ENCODE measurements at regions of chr19 and their contacts with region 1.

Region 1: GRCh38 chr19:1605236-1606137 is at the start of gene UQCR11:
- DNase-seq: peak; percentile 94
- H3K4me3 Mint-ChIP-seq: peak within 1 kb of the TSS; percentile 98
- H3K27ac Mint-ChIP-seq: peak within 1 kb of the TSS; percentile 97
- H3K4me1 Mint-ChIP-seq: peaks cover 48% of the 10 kb centered on the region
- H3K27me3 Mint-ChIP-seq: no peaks in the 10 kb centered on the region
- total RNA-seq, gene UQCR11: 281 to 293 TPM

Region 2: DNA sequence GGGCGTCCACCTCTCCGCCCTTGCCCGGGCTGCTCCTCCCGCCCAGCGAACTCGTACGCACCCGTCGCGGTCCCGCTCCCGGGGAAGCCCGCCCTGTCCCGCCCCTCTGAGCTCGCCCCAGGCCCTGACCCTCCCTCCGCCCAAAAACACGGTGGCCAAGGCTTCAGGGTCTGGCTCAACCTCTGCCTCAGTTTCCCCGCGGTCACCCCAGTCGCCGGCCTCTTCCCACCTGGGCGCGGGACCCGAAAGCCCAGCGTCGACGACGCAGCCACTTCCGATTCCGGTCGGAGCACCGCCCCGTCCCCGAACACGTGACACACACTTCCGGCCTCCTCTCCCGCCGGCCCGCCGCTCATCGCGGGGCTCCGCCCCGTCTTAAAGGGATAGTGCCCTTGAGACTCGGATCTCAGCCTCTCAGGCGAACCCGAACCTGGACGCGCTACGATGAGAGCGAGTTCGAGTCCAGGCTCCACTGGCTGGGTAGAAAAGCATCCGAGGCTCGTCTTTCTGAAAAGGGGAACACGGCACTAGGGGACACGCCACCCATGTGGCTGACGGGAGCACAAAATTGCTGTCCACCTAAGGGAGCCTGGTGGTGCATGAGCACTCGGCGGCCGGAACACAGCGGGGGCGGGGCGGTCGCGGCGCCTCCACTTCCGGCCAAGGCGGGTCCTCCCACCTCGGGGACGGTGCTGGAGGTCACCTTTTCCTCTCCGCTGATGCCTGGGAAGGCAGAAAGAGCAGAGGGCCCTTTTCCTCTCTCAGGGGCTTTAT is 126.4 kb before region 1 on chr19 and contains the start of gene C19orf25:
- CTCF ChIA-PET with region 1: no interaction called
- intact Hi-C with region 1: loop called (anchors 1 kb)
- DNase-seq: peak; percentile 96
- H3K4me3 Mint-ChIP-seq: peak within 1 kb of the TSS; percentile 99
- H3K27ac Mint-ChIP-seq: peak within 1 kb of the TSS; percentile 95
- H3K4me1 Mint-ChIP-seq: peaks cover 15% of the 10 kb centered on the region
- H3K27me3 Mint-ChIP-seq: no peaks in the 10 kb centered on the region
- total RNA-seq, gene C19orf25: 17.5 to 20.8 TPM

Region 3: GRCh38 chr19:1592755-1593500 is 12.6 kb before region 1 on chr19 and contains the start of gene MBD3:
- CTCF ChIA-PET with region 1: interaction called, 6 read pairs
- intact Hi-C with region 1: loop called (anchors 1 kb)
- DNase-seq: peak; percentile 84
- H3K4me3 Mint-ChIP-seq: peak within 1 kb of the TSS; percentile 96
- H3K27ac Mint-ChIP-seq: peak within 1 kb of the TSS; percentile 82
- H3K4me1 Mint-ChIP-seq: peaks cover 20% of the 10 kb centered on the region
- H3K27me3 Mint-ChIP-seq: no peaks in the 10 kb centered on the region
- total RNA-seq, gene MBD3: 58.1 to 63.7 TPM

Region 4: DNA sequence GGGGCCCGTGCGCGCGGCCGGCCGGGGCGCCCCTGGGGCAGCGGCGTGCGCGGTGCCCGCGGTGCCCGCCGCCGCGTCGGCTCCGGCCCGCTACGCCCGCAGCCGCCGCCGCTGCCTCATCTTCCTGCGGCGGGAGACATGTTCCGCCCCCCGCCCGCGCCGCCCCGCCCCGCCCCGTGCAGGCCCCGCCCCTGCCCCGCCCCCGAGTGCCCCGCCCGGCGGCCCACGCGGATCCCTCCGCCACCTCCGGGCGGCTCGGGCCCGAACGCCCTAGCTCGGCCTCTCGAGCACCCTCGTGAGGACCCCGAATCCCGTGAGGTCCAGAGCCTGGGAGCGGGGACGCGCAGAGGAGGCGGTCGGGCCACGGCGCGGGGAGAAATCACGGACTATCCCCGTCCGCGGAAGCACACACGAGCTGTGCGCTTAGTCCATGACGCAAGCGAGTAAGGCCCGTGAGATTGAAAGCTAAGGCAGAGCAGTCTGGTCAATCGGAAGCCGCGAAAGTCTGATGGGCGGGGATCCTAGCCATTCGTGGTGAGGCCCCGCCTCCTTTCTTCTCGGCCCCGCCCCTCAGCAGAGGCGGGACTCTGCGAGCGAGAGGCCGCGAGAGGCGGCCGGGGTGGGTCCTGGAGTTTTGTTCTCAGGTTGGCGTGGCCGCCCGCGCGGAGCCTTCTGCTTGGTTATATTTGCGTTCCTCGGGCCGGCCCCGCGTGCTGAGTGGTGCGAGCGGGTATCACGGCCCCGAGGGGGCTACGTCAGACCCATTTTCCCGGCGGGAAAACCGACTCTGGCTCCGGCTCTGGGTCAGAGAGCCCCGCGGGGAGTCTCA is 47.2 kb after region 1 on chr19 and contains the start of gene TCF3:
- CTCF ChIA-PET with region 1: no interaction called
- intact Hi-C with region 1: loop called (anchors 1 kb)
- DNase-seq: peak; percentile 98
- H3K4me3 Mint-ChIP-seq: peak within 1 kb of the TSS; percentile 82
- H3K27ac Mint-ChIP-seq: peak within 1 kb of the TSS; percentile 89
- H3K4me1 Mint-ChIP-seq: peaks cover 19% of the 10 kb centered on the region
- H3K27me3 Mint-ChIP-seq: no peaks in the 10 kb centered on the region
- total RNA-seq, gene TCF3: 84.8 to 86.7 TPM

Region 5: GRCh38 chr19:1767464-1767933 is 162.0 kb after region 1 on chr19:
- CTCF ChIA-PET with region 1: interaction called, 3 read pairs
- intact Hi-C with region 1: loop called (anchors 1 kb)
- DNase-seq: peak; percentile 65
- H3K4me3 Mint-ChIP-seq: no peak overlapping the region
- H3K27ac Mint-ChIP-seq: no peak overlapping the region
- H3K4me1 Mint-ChIP-seq: no peaks in the 10 kb centered on the region
- H3K27me3 Mint-ChIP-seq: peaks cover 70% of the 10 kb centered on the region

Region 6: DNA sequence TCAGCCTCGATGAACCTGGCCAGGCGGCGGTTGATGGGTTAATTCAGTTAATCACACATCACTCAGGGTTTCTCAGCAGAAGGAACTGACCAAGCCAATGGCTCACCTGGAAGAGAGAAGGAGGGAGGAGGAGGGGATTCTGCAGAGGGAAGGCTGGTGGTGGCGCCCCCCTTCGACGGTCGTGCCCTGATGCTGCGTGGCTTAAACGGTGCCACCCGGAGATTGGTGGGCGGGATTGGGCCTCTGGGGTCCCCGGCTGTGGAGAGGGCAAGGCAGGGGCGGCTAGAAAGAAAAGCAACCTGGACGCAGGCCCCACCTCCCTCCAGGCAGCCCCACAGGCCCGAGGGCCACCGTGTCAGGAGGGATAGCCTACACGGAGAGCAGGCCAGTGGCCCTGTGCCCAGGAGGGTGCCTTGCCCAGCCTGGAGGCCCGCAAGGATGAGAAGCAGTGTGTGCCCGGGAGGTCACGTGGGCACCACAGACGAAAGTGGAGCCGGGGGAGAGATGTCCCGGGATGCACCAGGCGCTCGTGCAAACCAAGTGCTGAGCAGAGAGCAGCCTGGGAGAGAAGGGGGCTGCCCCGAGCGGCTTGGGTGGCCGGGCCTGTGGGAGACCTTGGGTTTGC is 351.5 kb after region 1 on chr19:
- CTCF ChIA-PET with region 1: no interaction called
- intact Hi-C with region 1: no loop called
- DNase-seq: no peak
- H3K4me3 Mint-ChIP-seq: no peak overlapping the region
- H3K27ac Mint-ChIP-seq: no peak overlapping the region
- H3K4me1 Mint-ChIP-seq: peaks cover 6% of the 10 kb centered on the region
- H3K27me3 Mint-ChIP-seq: no peaks in the 10 kb centered on the region